ENCODE measurements at regions of chr1 and their contacts with region 1.

Region 1: DNA sequence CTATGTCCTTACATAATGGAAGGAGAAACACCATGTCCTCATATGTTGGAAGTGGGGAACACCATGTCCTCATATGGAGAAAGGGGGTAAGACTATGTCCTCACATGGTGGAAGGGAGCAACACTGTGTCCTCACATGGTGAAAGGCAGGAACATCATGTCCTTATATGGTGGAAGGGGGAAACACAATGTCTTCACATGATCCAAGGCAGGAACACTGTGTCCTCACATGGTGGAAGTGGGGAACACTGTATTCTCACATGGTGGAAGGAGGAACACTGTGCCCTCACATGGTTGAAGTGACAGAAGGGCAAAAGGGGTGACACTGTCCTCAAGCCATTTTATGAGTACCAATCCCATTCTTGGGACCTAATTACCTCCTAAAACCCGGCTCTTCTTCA is 146.3 kb upstream of the ETV3 start:
- DNase-seq: no peak
- ATAC-seq: no peak
- H3K4me3 Mint-ChIP-seq: no peak overlapping the region
- H3K27ac Mint-ChIP-seq: no peak overlapping the region
- H3K4me1 Mint-ChIP-seq: peaks cover 3% of the 10 kb centered on the region
- H3K27me3 Mint-ChIP-seq: peaks cover 38% of the 10 kb centered on the region
- CTCF ChIP-seq: no peak

Region 2: DNA sequence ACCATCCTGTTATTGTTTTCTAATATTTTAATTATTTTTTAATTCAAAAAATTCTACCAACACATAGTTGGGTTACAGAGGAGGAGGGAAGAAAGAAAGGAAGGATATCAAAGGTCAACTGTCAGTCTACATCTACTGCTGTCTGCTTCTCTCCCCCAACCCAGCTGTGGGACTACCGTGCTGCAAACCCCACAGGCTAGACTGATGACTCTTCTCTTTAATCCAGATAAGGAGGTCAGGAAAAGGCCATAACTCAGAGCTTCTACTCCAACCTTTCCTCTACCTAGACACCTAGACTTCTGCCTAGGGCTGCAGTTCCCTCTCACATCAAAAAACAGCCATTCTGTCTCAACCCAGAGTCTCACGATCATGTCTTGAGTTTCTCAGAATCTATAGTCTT is 22.0 kb before region 1 on chr1:
- CTCF ChIA-PET with region 1: no interaction called
- POLR2A ChIA-PET with region 1: no interaction called
- intact Hi-C with region 1: loop called (anchors 1 kb)
- DNase-seq: no peak
- ATAC-seq: no peak
- H3K4me3 Mint-ChIP-seq: no peak overlapping the region
- H3K27ac Mint-ChIP-seq: no peak overlapping the region
- H3K4me1 Mint-ChIP-seq: peaks cover 1% of the 10 kb centered on the region
- H3K27me3 Mint-ChIP-seq: no peaks in the 10 kb centered on the region
- CTCF ChIP-seq: no peak

Measured in activated B cell treated with CpG ODN at 0.5 μM for 24 hours (primary cell).